Activated CD4-positive, alpha-beta memory T cell treated with anti-CD3 and anti-CD28 coated beads for 36 hours (primary cell): ENCODE measurements at regions of chr12 and their contacts with region 1.

Region 1: DNA sequence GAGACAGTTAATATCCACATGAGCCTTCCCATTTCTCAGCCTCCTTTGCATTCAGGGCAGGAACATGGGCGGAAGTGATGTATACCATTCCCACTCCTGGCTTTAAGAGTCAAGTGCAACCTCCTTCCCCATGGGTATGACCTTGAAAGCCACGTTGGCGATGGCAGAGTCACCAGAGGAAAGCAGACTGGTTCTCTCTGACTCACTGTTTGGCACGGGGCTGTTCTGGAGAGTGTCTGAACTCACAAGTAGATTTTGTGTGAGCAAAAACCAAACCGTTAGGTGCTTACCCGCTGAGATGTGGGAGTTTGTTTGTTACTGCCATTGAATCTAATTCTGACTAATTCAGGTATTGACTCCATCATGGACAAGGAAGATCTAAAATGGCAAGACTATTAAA is 36.7 kb upstream of the PZP start:
- DNase-seq: peak; percentile 89
- H3K4me3 Mint-ChIP-seq: peak overlapping the region; percentile 6
- H3K27ac Mint-ChIP-seq: peak overlapping the region; percentile 82
- H3K4me1 Mint-ChIP-seq: peaks cover 52% of the 10 kb centered on the region
- H3K27me3 Mint-ChIP-seq: peaks cover 3% of the 10 kb centered on the region

Region 2: DNA sequence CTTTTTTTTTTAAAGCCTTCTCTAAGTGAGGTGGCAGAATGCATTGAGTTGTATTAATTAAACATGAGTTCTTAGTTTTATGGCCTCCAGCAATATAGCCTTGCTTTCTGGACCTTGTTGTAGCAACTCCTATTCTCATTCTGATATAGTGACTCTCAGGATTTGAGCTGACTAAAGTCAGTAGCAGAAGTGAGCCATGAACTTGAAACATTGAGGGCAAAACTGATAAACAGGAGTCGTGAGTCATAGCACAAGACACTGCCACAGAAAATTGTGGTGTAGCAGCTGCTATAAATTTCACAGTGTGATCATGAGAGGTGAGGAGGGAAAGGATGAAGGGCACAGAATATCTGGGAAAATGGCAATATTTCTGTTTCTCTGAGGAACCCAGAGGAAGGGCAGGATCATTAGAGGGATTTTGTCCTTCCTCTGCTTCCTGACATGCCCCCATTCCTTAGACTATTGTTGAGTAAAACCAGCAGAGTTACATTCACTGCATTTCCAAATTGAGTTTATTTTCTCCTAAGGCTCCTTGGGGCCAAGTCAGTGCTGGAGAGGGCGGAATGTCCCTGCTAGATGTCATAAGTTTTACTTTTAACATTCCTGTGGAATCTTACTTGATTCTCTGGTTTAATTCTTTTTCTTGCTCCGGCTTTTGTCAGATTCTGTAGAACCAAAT is 248.1 kb before region 1 on chr12:
- CTCF ChIA-PET with region 1: no interaction called
- POLR2A ChIA-PET with region 1: no interaction called
- intact Hi-C with region 1: loop called (anchors 10 kb)
- DNase-seq: peak; percentile 58
- H3K4me3 Mint-ChIP-seq: no peak overlapping the region
- H3K27ac Mint-ChIP-seq: no peak overlapping the region
- H3K4me1 Mint-ChIP-seq: peaks cover 70% of the 10 kb centered on the region
- H3K27me3 Mint-ChIP-seq: no peaks in the 10 kb centered on the region

Region 3: DNA sequence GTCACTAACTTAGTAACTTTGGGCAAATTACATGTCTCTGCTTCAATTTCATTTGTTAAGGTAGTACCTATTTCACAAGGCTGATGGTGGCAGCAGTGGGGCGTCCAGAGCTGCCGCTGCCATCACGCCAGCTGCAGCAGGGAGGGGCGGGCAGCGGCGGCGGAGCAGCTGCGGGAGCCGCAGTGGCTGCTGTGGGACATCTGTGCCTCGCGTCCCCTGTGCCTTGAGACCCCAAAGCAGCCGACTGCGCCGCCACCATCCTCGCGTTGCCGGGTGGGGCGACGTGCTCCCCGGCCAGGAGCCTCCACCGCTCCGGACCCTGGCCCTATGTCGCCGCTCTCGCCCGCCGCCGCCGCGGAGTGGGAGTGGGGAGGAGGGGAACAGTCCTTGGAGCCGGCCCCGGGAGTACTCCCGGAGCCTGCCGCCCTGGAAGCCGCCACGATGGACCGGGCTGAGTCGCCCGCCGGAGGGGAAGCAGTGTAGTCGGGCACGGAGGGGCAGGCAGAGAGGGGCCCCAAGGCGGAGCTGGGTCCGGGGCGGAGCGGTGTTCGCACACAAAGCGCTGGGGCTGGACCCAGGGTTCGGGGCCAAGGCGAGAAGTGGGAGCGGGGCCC is 180.6 kb before region 1 on chr12:
- CTCF ChIA-PET with region 1: interaction called, 3 read pairs
- POLR2A ChIA-PET with region 1: no interaction called
- intact Hi-C with region 1: loop called (anchors 10 kb)
- DNase-seq: peak; percentile 73
- H3K4me3 Mint-ChIP-seq: peak overlapping the region; percentile 54
- H3K27ac Mint-ChIP-seq: no peak overlapping the region
- H3K4me1 Mint-ChIP-seq: peaks cover 7% of the 10 kb centered on the region
- H3K27me3 Mint-ChIP-seq: no peaks in the 10 kb centered on the region

Region 4: DNA sequence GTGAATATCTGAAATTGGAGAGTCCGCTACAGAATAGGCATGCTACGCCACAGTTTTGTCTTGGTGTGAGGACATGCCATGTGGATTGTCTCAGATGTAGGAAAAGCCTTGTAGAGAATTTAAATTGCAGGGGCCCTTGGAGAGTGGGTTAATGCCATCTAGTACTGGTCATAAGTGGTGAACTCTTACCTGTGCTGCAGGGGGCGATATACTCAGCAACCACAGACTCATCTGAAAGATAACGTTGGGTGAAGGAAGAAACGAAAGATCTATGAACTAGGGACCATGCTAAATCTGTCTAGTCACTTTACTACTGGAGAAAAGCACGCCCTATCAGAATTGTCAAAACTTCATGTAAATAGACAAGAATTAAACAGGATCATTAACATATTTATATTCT is 95.5 kb before region 1 on chr12:
- CTCF ChIA-PET with region 1: no interaction called
- POLR2A ChIA-PET with region 1: no interaction called
- intact Hi-C with region 1: loop called (anchors 5 kb)
- DNase-seq: no peak
- H3K4me3 Mint-ChIP-seq: no peak overlapping the region
- H3K27ac Mint-ChIP-seq: no peak overlapping the region
- H3K4me1 Mint-ChIP-seq: peaks cover 17% of the 10 kb centered on the region
- H3K27me3 Mint-ChIP-seq: no peaks in the 10 kb centered on the region

Region 5: DNA sequence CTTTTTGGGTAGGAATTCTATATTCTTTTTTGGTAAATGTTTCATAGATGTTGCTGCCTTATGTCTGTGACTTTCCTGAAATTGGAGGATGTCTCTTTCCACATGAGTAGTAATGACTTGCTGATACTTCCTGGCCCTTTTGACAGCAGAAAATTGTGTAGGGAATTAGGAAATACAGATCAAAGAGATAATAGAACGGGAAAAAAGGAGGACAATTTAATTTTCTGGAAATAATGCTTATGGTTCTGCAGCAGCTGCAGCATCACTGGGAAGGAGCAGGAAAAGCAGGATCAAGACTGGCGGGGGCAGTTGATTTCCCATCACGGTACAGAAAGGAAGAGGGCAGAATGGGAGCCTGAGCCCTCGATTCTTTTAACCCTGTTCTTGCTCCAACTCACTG is 32.1 kb after region 1 on chr12:
- CTCF ChIA-PET with region 1: no interaction called
- POLR2A ChIA-PET with region 1: no interaction called
- intact Hi-C with region 1: loop called (anchors 5 kb)
- DNase-seq: no peak
- H3K4me3 Mint-ChIP-seq: no peak overlapping the region
- H3K27ac Mint-ChIP-seq: no peak overlapping the region
- H3K4me1 Mint-ChIP-seq: peaks cover under 1% of the 10 kb centered on the region
- H3K27me3 Mint-ChIP-seq: peaks cover 8% of the 10 kb centered on the region

Region 6: DNA sequence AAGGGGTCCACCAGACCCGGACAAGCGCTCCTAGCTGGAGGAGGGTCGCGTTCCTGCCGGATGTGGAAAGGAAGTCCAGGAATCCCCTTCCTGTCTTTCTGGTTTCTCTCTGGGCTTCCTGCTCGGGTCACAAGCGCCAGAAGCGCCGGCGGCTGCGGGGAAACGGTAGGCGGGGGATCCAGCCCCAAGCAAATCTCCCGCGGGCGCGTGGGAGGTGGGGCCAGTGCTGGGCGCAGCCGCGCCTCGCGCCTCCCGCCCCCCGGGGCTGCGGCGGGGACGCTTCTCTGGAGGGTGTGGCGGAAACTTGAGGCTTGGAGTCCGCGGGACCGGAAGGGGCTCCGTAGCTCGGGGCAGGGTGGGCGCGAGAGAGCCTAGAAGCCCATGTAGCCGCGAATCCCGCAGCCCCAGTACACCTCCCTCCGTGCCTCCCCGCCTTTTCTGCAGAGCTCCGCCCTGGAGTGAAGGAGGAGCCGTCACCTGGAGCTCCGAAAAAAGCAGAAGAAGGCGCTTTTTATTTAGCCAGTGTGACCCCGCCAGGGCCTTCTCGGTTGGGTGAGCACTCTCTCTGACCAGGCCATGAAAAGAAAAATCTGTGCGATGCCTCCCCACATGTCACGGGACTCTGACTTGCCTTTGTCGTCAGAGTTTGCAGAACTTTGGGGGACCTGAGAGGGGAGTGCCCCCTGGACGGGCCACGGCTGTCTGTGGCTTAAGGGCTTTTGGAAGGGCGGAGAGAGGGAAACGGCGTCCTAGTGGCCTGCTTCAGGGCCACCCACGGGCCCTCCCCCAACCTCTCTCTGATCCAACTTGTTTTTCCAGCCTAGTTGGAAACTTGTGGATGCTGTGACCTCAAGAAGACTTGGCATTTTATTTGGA is 403.2 kb after region 1 on chr12:
- CTCF ChIA-PET with region 1: no interaction called
- POLR2A ChIA-PET with region 1: no interaction called
- intact Hi-C with region 1: loop called (anchors 10 kb)
- DNase-seq: peak; percentile 96
- H3K4me3 Mint-ChIP-seq: peak overlapping the region; percentile 85
- H3K27ac Mint-ChIP-seq: peak overlapping the region; percentile 97
- H3K4me1 Mint-ChIP-seq: peaks cover 53% of the 10 kb centered on the region
- H3K27me3 Mint-ChIP-seq: peaks cover 2% of the 10 kb centered on the region

Region 7: GRCh38 chr12:9869307-9870161 is 624.6 kb after region 1 on chr12 and contains the start of gene CLEC2B:
- CTCF ChIA-PET with region 1: no interaction called
- POLR2A ChIA-PET with region 1: no interaction called
- intact Hi-C with region 1: loop called (anchors 5 kb)
- DNase-seq: peak; percentile 41
- H3K4me3 Mint-ChIP-seq: peak within 1 kb of the TSS; percentile 82
- H3K27ac Mint-ChIP-seq: peak within 1 kb of the TSS; percentile 93
- H3K4me1 Mint-ChIP-seq: peaks cover 19% of the 10 kb centered on the region
- H3K27me3 Mint-ChIP-seq: no peaks in the 10 kb centered on the region
- total RNA-seq, gene CLEC2B: 12.6 to 13.7 TPM